ENCODE measurements at regions of chr18 and their contacts with region 1.

Region 1: DNA sequence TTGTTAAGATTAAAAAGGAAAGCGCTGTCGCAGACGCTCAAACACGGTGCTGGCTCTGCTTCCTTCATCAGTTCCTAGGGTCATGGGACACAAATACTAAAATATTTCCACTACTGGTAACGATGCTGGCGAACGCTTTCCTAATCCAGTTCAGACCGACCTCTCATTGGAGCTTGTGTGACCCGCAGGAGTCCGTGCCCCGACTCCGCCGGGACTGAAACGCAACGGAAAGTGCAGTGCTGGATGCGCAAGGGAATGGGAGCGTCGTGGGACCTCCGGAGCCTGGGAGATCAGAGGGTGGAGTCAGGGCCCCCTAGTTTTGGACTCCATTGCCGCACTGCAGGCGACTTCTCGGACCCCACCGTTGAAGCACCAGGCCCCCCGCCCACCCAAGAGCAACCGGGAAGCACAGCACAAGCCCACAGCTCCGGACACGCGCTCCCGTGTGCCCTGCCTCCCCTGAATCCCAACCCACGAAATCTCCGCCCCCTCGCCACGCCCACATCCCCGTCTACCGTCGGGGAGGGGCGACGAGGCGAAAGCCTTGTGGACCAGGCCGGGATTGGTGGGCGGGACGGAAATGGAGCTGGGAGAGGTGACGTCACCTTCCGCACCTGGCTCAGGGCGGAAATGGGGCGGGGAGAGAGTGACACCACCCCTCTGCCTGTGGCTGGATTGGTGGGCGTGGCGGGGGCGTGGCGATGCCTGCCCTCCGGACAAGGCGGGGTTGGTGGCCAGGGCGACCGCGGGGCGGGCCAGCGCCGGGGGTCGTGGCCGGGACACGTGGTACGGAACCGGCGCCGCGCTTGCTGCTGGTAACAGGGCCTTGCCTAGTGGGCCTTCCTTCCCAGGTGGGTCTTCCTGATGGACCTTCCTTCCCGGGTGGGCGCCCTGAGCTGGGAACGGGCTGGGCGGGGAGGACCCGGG is at the start of gene CNDP2:
- DNase-seq: peak; percentile 99
- ATAC-seq: peak; percentile 72
- H3K4me3 ChIP-seq: peak within 1 kb of the TSS; percentile 78
- H3K27ac ChIP-seq: peak within 1 kb of the TSS; percentile 62
- H3K4me1 ChIP-seq: peaks cover 34% of the 10 kb centered on the region
- H3K27me3 ChIP-seq: no peaks in the 10 kb centered on the region
- CTCF ChIP-seq: no peak
- total RNA-seq, gene CNDP2: 50.0 and 57.6 TPM in 2 replicates

Region 2: DNA sequence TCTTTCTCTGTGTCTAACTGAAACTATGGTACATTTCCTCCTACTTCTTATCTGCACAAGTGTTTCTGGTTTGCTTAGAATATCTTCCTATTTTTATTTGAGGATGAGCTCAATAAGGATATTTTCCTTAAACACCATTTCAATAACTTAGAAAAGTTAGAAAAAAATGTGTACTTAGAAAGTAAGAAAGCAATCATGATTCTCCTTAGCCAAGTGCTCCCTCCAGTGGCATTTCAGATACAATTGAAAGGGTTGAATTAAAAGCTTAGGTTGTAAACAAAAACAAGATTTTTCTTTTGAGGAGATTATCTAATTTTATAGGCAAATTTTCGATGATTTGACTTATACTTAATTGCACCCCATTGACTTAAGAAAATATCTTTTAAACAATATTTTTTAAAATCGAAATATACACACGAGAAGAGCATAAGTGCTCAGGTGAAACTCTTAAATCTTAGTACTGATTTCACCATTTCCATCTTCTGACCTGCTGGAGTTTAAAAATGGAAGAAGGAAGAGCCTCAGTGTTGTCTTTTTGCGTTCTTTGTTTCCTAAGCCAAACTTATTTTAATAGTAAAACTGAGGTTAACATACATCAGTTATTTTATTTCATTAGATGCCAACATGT is 153.3 kb before region 1 on chr18:
- CTCF ChIA-PET with region 1: interaction called, 12 read pairs
- POLR2A ChIA-PET with region 1: no interaction called
- intact Hi-C with region 1: no loop called
- DNase-seq: peak; percentile 75
- ATAC-seq: no peak
- H3K4me3 ChIP-seq: no peak overlapping the region
- H3K27ac ChIP-seq: no peak overlapping the region
- H3K4me1 ChIP-seq: no peaks in the 10 kb centered on the region
- H3K27me3 ChIP-seq: no peaks in the 10 kb centered on the region
- CTCF ChIP-seq: peak; percentile 87

Region 3: DNA sequence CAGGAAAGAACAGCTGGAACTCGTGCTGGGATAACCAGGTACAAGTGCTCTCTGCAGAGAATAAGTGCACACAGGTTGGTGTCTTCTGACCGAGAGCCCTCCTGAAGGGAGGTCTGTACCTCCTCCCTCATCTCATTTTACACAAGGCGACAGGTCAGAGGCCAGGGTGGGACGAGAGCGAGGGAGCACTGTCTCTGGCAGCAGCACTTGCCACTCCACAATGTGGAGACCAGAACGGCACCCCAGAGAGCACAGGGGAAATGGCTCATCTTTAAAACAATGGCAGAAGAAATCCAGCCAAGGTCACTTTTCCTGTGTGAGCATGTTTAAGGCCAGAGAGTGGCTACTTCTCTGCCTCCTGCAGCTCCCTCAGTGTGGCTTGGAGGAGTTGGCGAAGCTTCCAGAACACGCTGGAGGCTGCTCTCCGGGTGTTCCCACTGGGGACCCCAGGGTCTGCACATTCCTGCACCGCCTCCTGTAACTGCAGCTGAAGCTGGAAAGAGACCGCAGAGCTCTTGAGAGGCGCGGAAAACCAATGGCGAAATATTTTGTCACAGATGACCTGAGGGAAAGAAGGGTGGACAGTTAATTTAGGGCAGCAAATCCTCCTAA is 59.6 kb before region 1 on chr18:
- CTCF ChIA-PET with region 1: no interaction called
- POLR2A ChIA-PET with region 1: no interaction called
- intact Hi-C with region 1: loop called (anchors 10 kb)
- DNase-seq: no peak
- ATAC-seq: no peak
- H3K4me3 ChIP-seq: no peak overlapping the region
- H3K27ac ChIP-seq: no peak overlapping the region
- H3K4me1 ChIP-seq: no peaks in the 10 kb centered on the region
- H3K27me3 ChIP-seq: peaks cover 74% of the 10 kb centered on the region
- CTCF ChIP-seq: no peak

Region 4: DNA sequence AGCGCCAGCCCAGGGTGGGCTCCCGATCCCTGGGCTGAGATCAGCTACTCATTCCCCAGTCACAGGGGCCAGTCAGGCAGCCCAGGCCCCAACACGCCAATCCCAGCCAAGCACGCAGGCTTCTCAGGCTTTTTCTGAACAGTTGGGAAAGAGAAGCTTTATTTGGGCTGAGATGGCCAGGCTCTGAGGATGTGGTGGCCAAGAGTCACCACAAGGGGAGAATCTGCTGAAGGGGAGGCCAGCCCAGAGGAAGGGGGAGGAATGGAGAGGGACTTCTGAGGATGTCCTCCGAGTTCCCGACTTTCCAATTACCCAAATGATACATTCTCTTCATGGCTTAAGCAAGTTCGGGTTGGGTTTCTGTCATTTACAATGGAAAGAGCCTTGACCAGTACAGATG is 36.0 kb before region 1 on chr18:
- CTCF ChIA-PET with region 1: interaction called, 12 read pairs
- POLR2A ChIA-PET with region 1: interaction called, 3 read pairs
- intact Hi-C with region 1: no loop called
- DNase-seq: no peak
- ATAC-seq: peak; percentile 61
- H3K4me3 ChIP-seq: no peak overlapping the region
- H3K27ac ChIP-seq: no peak overlapping the region
- H3K4me1 ChIP-seq: no peaks in the 10 kb centered on the region
- H3K27me3 ChIP-seq: peaks cover 73% of the 10 kb centered on the region
- CTCF ChIP-seq: no peak; the same call in 1 of the 2 replicates

Region 5: DNA sequence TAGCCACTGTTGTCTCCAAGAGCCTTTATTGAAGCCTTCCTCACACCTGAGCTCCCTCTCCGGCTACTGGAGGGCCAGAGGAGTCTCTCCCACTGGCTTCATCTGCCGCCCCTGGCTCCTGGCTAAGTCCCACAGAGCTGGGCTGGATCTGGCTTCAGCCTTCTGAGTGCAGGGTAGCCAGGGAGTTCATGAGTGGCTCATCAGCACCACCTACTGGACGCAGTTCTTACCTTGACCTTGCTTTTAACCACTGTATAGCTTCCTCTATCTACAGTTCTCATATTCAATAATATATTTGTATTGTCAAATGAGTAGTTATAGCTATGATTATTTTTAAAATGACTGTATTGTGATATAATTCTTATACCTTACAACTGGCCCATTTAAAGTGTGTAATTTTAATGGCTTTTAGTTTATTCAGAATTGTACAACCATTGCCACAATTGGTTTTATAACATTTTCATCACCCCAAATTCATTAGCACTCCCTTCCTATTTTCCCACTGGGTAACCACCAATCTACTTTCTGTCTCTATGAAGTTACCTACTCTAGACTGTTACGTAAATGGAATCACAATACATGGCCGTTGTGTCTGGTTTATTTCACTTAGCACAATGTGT is 56.2 kb after region 1 on chr18:
- CTCF ChIA-PET with region 1: interaction called, 36 read pairs
- POLR2A ChIA-PET with region 1: no interaction called
- intact Hi-C with region 1: loop called (anchors 1 kb)
- DNase-seq: peak; percentile 85
- ATAC-seq: peak; percentile 100
- H3K4me3 ChIP-seq: no peak overlapping the region
- H3K27ac ChIP-seq: no peak overlapping the region
- H3K4me1 ChIP-seq: peaks cover 5% of the 10 kb centered on the region
- H3K27me3 ChIP-seq: peaks cover 42% of the 10 kb centered on the region
- CTCF ChIP-seq: peak; percentile 85

Region 6: GRCh38 chr18:74577019-74577418 is 81.2 kb after region 1 on chr18:
- CTCF ChIA-PET with region 1: no interaction called
- POLR2A ChIA-PET with region 1: no interaction called
- intact Hi-C with region 1: no loop called
- DNase-seq: no peak
- ATAC-seq: no peak
- H3K4me3 ChIP-seq: no peak overlapping the region
- H3K27ac ChIP-seq: no peak overlapping the region
- H3K4me1 ChIP-seq: no peaks in the 10 kb centered on the region
- H3K27me3 ChIP-seq: peaks cover 73% of the 10 kb centered on the region
- CTCF ChIP-seq: no peak

Measured in PC-3 (cell line).